ENCODE measurements at regions of chr6 and their contacts with region 1.

Region 1: GRCh38 chr6:23055523-23055922 is 486.2 kb downstream of the HDGFL1 start:
- DNase-seq: no peak

Region 2: DNA sequence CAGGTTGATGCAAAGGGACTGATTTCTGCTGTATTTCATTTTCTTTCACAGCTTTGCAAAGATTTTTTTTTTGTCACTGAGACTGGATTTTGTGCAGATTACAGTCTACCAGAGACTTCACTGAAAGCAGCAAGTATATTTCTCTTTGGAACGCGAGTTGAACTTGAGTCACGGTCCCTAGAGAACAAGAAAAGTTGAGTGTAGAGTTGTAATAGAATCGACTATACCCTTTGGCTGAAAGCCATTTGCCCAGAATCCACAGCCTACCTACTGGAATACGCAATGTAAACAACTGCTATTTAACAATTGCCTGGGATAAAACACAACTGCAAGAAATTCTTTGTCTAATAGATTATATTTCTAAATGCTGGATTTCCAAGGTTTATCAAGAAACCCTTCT is 34.5 kb after region 1 on chr6:
- intact Hi-C with region 1: loop called in 1 of 2 experiments (anchors 2 kb)
- DNase-seq: no peak

Region 3: GRCh38 chr6:24157886-24158285 is 1102.4 kb after region 1 on chr6:
- intact Hi-C with region 1: loop called in 1 of 2 experiments (anchors 10 kb)
- DNase-seq: no peak